Activated B cell treated with CpG ODN at 0.5 μM for 24 hours (primary cell): ENCODE measurements at regions of chr3 and their contacts with region 1.

Region 1: GRCh38 chr3:129490242-129491045 is 38.0 kb upstream of the RHO start:
- DNase-seq: peak; percentile 30
- ATAC-seq: peak; percentile 95
- H3K4me3 Mint-ChIP-seq: no peak overlapping the region
- H3K27ac Mint-ChIP-seq: no peak overlapping the region
- H3K4me1 Mint-ChIP-seq: no peaks in the 10 kb centered on the region
- H3K27me3 Mint-ChIP-seq: no peaks in the 10 kb centered on the region
- CTCF ChIP-seq: peak; percentile 27

Region 2: GRCh38 chr3:129383292-129383860 is 107.1 kb before region 1 on chr3:
- CTCF ChIA-PET with region 1: interaction called, 32 read pairs
- POLR2A ChIA-PET with region 1: no interaction called
- intact Hi-C with region 1: loop called (anchors 1 kb)
- DNase-seq: peak; percentile 26
- ATAC-seq: peak; percentile 98
- H3K4me3 Mint-ChIP-seq: no peak overlapping the region
- H3K27ac Mint-ChIP-seq: no peak overlapping the region
- H3K4me1 Mint-ChIP-seq: no peaks in the 10 kb centered on the region
- H3K27me3 Mint-ChIP-seq: no peaks in the 10 kb centered on the region
- CTCF ChIP-seq: peak; percentile 23

Region 3: GRCh38 chr3:129586746-129587430 is 96.4 kb after region 1 on chr3:
- CTCF ChIA-PET with region 1: no interaction called
- POLR2A ChIA-PET with region 1: no interaction called
- intact Hi-C with region 1: no loop called
- DNase-seq: no peak
- ATAC-seq: no peak
- H3K4me3 Mint-ChIP-seq: no peak overlapping the region
- H3K27ac Mint-ChIP-seq: no peak overlapping the region
- H3K4me1 Mint-ChIP-seq: peaks cover 8% of the 10 kb centered on the region
- H3K27me3 Mint-ChIP-seq: peaks cover 4% of the 10 kb centered on the region
- CTCF ChIP-seq: no peak

Region 4: GRCh38 chr3:129606636-129607390 is 116.4 kb after region 1 on chr3 and contains the start of gene PLXND1:
- CTCF ChIA-PET with region 1: interaction called, 5 read pairs
- POLR2A ChIA-PET with region 1: interaction called, 3 read pairs
- intact Hi-C with region 1: loop called (anchors 2 kb)
- DNase-seq: peak; percentile 34
- ATAC-seq: peak; percentile 75
- H3K4me3 Mint-ChIP-seq: peak within 1 kb of the TSS; percentile 86
- H3K27ac Mint-ChIP-seq: no peak within 1 kb of the TSS
- H3K4me1 Mint-ChIP-seq: peaks cover 10% of the 10 kb centered on the region
- H3K27me3 Mint-ChIP-seq: peaks cover 24% of the 10 kb centered on the region
- CTCF ChIP-seq: no peak
- total RNA-seq, gene PLXND1: 3.1 and 3.7 TPM in 2 replicates

Region 5: DNA sequence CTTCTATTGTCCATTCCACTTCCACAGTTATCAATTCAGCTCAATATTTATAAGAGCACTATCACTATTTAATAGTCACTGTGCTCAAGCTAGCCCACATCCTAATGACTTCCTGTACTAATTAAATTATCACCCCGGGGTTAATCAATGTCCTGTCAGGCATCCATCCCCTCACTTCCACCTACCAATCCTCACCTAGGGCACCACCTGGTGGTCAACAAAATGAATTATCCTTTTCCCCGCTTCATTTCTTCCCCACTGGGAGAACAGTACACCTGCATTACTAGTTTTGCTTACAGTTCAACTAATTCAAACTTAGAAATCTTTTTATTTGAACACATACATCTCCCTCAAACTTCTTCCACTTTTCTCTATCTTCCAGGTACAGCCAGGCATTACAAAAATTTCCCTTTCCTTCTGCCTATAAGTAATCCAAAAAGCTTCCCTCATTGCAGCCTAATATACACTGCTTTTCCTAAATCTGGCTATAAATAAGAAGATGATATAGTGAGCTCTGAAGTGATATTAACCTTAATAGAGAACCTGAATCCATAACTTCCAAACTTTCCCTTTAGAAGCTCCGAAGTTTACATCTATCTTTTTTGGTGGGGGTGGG is 334.6 kb after region 1 on chr3:
- CTCF ChIA-PET with region 1: interaction called, 76 read pairs
- POLR2A ChIA-PET with region 1: no interaction called
- intact Hi-C with region 1: loop called (anchors 1 kb)
- DNase-seq: no peak
- ATAC-seq: peak; percentile 23
- H3K4me3 Mint-ChIP-seq: no peak overlapping the region
- H3K27ac Mint-ChIP-seq: peak overlapping the region; percentile 2
- H3K4me1 Mint-ChIP-seq: peaks cover 50% of the 10 kb centered on the region
- H3K27me3 Mint-ChIP-seq: no peaks in the 10 kb centered on the region
- CTCF ChIP-seq: peak; percentile 78

Region 6: DNA sequence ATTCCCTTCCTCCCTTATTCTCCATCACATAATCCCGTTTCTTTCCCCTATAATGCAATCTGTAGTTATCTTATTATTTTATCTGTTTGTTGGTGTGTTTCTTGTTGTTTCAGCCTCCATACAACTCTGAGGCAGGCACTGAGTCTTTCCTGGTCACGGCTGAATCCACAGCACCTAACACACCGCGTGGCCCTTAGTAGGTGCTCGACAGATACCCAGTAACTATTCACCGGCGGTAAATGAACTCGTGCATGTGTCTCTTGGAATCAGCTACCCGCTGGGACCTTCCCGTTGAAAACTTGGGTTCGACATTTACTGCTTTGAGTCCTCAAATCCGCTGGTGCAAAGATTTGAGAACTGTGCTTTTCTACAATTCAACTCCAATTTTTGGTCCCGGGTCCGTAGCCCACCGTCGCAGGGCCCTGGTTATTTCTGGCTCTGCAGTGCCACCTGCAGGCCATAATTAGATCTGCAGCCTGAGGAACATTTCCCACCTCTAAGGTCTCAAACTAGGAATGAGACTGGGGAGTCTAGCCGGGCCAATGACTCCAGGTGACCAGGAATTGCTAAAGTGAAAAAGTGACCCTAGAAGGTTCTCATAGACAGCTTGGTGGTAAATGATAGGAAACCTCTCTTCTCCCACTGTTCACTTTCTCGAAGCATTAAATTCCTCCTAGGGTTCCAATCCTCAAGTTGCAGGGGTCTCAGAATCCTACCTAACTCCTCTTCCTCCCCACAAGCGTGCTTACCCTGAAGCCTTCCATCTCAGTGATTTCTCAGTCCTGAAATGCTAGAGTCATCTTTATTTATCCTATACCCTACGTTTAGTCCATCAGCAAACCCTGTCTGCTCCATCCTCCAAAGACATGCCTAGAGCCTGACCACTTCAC is 444.0 kb after region 1 on chr3:
- CTCF ChIA-PET with region 1: interaction called, 30 read pairs
- POLR2A ChIA-PET with region 1: no interaction called
- intact Hi-C with region 1: no loop called
- DNase-seq: peak; percentile 20
- ATAC-seq: peak; percentile 64
- H3K4me3 Mint-ChIP-seq: no peak overlapping the region
- H3K27ac Mint-ChIP-seq: no peak overlapping the region
- H3K4me1 Mint-ChIP-seq: peaks cover 8% of the 10 kb centered on the region
- H3K27me3 Mint-ChIP-seq: peaks cover 4% of the 10 kb centered on the region
- CTCF ChIP-seq: peak; percentile 81